Activated CD4-positive, alpha-beta memory T cell treated with anti-CD3 and anti-CD28 coated beads for 36 hours (primary cell): ENCODE measurements at regions of chr4 and their contacts with region 1.

Region 1: GRCh38 chr4:99847362-99847976 is 30.8 kb downstream of the DAPP1 start:
- DNase-seq: peak; percentile 47
- H3K4me3 Mint-ChIP-seq: peak overlapping the region; percentile 59
- H3K27ac Mint-ChIP-seq: peak overlapping the region; percentile 95
- H3K4me1 Mint-ChIP-seq: peaks cover 74% of the 10 kb centered on the region
- H3K27me3 Mint-ChIP-seq: no peaks in the 10 kb centered on the region

Region 2: GRCh38 chr4:99159699-99160098 is 687.8 kb before region 1 on chr4:
- CTCF ChIA-PET with region 1: no interaction called
- POLR2A ChIA-PET with region 1: no interaction called
- intact Hi-C with region 1: no loop called
- DNase-seq: no peak
- H3K4me3 Mint-ChIP-seq: no peak overlapping the region
- H3K27ac Mint-ChIP-seq: no peak overlapping the region
- H3K4me1 Mint-ChIP-seq: no peaks in the 10 kb centered on the region
- H3K27me3 Mint-ChIP-seq: no peaks in the 10 kb centered on the region

Region 3: DNA sequence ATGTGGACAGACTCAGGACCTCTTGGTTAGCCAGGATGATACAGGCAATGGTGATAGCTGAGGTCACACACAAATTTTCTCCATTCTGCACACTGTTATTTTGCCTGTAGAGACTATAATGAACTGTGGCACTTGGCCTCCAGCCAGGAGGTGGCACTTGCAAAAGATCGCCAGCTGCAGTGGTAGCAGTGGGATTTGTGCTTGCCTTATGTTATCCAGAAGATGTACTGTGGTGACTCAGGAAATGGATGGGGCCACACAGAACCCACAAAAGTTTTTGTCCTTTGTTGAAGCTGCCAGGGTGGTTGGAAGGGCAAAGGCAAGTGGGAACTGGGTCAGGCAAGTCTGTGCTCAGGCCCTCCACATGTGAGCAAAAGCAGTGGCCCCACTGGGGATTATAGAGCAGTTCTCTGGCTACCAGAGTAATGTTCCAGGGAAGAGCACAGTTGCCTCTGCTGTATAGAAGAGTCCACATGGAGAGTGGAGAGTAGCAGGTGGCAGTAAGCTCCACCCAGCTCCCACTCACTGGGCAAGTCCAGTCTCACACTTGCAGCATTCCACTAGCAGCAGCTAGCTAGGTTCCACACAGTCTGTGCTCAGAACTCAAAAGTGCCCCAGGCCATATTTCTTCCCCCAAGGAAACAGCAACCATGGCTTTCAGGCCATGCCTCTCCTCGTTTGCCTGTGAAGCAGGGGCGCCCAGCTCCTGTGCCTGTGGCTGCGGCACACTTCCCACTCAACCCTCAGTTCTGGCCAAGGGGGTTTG is 342.5 kb before region 1 on chr4:
- CTCF ChIA-PET with region 1: no interaction called
- POLR2A ChIA-PET with region 1: interaction called, 3 read pairs
- intact Hi-C with region 1: loop called (anchors 5 kb)
- DNase-seq: no peak
- H3K4me3 Mint-ChIP-seq: no peak overlapping the region
- H3K27ac Mint-ChIP-seq: no peak overlapping the region
- H3K4me1 Mint-ChIP-seq: peaks cover 46% of the 10 kb centered on the region
- H3K27me3 Mint-ChIP-seq: no peaks in the 10 kb centered on the region

Region 4: DNA sequence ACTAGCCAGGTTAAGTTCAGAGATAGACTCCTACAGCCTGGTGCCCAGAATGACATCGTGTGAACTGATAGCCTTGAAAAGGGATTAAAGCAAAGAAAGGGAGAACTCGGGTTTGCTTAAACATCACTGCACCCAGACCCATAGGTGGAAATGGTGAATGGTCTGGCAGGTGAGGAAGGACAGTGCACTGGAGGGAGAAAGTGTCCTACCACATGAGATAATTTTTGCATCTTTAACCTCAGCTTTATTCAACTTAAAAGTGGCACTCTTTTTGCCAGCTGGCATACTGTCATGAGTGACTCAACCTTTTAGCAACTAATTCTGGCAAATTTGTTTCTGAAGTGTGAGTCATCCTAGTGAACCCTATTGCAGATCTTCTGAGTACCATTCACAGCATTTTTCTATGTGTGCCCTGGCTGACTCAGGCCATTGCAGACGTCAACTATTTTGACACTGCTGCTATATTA is 83.8 kb before region 1 on chr4:
- CTCF ChIA-PET with region 1: no interaction called
- POLR2A ChIA-PET with region 1: no interaction called
- intact Hi-C with region 1: loop called (anchors 2 kb)
- DNase-seq: peak; percentile 38
- H3K4me3 Mint-ChIP-seq: no peak overlapping the region
- H3K27ac Mint-ChIP-seq: no peak overlapping the region
- H3K4me1 Mint-ChIP-seq: peaks cover 24% of the 10 kb centered on the region
- H3K27me3 Mint-ChIP-seq: peaks cover 12% of the 10 kb centered on the region

Region 5: GRCh38 chr4:99861120-99861905 is 13.8 kb after region 1 on chr4:
- CTCF ChIA-PET with region 1: interaction called, 8 read pairs
- POLR2A ChIA-PET with region 1: interaction called, 16 read pairs
- intact Hi-C with region 1: loop called (anchors 1 kb)
- DNase-seq: peak; percentile 60
- H3K4me3 Mint-ChIP-seq: no peak overlapping the region
- H3K27ac Mint-ChIP-seq: peak overlapping the region; percentile 81
- H3K4me1 Mint-ChIP-seq: peaks cover 40% of the 10 kb centered on the region
- H3K27me3 Mint-ChIP-seq: no peaks in the 10 kb centered on the region

Region 6: DNA sequence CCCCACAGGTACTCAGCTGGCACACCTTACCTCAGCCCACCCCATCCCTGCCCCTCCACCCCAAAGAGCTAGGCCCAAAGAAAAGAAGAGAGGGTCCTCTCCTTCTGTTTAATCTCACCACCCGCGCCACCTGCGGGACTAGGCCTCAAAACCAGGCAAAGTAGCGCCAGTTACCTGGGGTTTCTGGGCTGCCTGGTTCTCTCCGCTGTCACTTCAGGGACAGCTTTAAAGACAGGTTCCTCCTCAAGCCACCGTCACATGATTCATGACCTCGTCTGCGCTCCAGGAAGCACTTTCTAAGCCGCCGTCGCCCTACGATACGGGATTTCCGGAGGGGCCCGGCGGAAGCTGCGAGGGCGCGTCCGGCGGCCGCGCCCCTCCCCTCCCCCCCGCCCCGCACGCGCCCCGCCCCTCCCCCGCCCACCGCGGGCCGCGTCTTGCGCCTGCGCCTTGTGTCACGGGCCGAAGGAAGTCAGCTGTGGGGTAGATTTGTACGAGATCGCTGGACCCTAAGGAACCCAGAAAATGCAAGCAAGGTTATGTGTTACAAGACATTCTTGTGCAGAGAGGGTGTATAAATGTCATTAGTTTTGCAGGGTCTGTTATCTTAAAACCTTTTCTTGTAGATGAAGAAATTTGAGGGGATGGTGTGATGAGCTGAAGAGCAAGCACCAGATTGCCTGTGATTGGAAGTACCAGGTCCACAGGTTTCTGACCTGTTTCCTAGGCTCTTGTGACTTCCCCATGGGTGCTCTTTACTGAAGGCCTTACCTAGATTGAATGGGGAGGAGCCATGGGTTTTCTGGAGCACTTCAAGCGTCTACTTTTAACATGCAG is 46.9 kb after region 1 on chr4 and contains the start of gene LAMTOR3:
- CTCF ChIA-PET with region 1: no interaction called
- POLR2A ChIA-PET with region 1: no interaction called
- intact Hi-C with region 1: loop called (anchors 2 kb)
- DNase-seq: peak; percentile 94
- H3K4me3 Mint-ChIP-seq: peak within 1 kb of the TSS; percentile 98
- H3K27ac Mint-ChIP-seq: peak within 1 kb of the TSS; percentile 87
- H3K4me1 Mint-ChIP-seq: peaks cover 39% of the 10 kb centered on the region
- H3K27me3 Mint-ChIP-seq: no peaks in the 10 kb centered on the region
- total RNA-seq, gene LAMTOR3: 21.8 to 26.1 TPM

Region 7: DNA sequence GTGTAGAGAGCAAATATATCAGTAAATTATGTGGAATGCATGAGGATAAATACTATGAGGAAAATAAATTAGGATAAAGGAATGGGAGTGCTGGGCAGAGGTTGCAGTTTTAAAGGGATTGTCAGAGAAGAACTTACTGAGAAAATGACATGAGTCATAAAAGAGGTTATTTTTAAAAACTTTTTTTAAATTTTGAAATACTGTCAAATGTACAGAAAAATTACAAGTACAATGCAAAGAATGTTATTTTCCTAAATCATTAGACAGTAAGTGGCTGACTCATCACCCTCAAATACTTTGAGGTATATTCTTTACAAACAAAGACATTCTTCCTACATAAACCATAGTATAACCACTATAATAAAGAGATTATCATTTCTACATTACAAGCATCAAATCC is 132.4 kb after region 1 on chr4:
- CTCF ChIA-PET with region 1: no interaction called
- POLR2A ChIA-PET with region 1: no interaction called
- intact Hi-C with region 1: no loop called
- DNase-seq: no peak
- H3K4me3 Mint-ChIP-seq: no peak overlapping the region
- H3K27ac Mint-ChIP-seq: no peak overlapping the region
- H3K4me1 Mint-ChIP-seq: no peaks in the 10 kb centered on the region
- H3K27me3 Mint-ChIP-seq: peaks cover 4% of the 10 kb centered on the region